Activated CD4-positive, alpha-beta T cell treated with anti-CD3 and anti-CD28 coated beads, Interleukin-2, amount 10 ng/mL, durations not matched to agents 24 days and 14 days (primary cell): ENCODE measurements at regions of chr17 and their contacts with region 1.

Region 1: DNA sequence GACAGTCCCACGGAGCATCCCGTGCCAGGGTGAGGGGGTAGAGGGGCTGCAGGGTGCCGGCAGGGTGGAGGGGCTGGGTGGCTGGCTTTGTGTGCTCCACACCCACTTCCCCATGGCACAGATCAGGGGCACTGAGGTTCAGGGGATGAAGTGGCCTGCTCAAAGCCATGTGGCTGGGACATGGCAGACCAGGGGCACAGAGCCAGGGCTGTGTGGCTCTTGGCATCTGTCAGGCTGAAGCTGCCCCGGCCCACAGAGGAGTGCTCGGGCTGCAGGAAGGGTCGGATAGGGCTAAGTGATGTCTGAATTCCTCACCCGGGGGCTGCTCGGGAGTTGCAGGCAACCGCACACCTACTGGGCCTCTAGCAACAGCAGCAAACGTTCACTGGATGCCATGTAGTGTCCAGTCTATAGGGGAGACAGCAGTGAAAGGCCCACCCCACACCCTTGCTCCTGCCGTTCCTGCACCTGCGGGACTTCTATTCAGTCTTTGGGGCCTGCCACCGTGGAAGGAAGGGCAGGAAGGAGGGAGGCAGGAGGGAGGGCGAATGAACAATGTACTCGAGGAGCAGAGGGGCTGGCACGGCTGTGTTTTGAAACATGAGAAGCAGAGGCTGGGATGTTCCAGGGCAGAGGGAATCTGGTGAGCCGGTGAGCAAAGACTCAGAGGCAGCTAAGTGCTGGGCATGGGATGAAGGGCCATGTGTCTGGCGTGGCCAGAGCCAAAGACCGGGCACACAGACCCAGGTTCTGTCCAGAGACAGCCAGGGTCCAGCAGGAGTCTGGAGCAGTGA is 15.1 kb downstream of the SLC5A10 start:
- DNase-seq: no peak
- H3K4me3 Mint-ChIP-seq: no peak overlapping the region
- H3K27ac Mint-ChIP-seq: no peak overlapping the region
- H3K4me1 Mint-ChIP-seq: peaks cover 11% of the 10 kb centered on the region
- H3K27me3 Mint-ChIP-seq: no peaks in the 10 kb centered on the region

Region 2: GRCh38 chr17:18954321-18954720 is 12.7 kb before region 1 on chr17:
- intact Hi-C with region 1: loop called (anchors 2 kb)
- DNase-seq: no peak
- H3K4me3 Mint-ChIP-seq: no peak overlapping the region
- H3K27ac Mint-ChIP-seq: no peak overlapping the region
- H3K4me1 Mint-ChIP-seq: peaks cover 15% of the 10 kb centered on the region
- H3K27me3 Mint-ChIP-seq: peaks cover 9% of the 10 kb centered on the region

Region 3: DNA sequence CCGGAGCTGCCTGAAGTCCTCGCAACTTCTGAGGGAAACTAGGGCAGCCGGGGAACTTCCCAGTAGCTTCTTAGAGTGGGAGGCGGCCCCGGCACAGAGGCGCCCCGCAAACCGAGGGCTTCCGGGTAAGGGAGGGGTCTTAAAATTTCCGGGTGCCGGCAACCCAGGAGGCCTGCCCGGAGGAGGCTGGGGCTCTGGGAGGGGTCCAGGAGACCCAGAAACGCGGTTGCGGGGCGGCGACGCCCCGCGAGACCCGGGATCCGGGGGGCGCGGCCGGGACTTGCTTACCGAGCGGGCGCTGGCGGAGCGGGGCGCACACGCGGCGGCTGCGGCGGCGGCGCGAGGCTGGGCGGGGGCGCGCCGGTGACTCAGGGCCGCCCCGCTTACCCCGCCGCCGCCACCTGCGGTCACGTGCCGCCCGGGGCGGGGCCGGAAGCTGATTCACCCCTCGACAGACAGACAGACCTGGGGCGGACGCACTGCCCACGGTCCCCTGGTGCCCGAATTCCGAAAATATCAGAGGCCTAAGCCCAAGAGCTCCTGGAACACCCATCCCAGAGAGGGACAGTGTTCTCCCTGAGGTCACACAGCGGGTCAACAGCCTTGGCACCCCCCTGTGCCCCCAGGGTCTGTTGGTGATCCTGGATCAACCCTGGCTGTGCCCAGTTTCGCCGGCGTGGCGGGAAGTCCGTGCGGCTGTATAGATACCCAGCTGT is 37.6 kb after region 1 on chr17 and contains the start of gene FAM83G:
- intact Hi-C with region 1: loop called (anchors 5 kb)
- DNase-seq: peak; percentile 94
- H3K4me3 Mint-ChIP-seq: peak within 1 kb of the TSS; percentile 90
- H3K27ac Mint-ChIP-seq: peak within 1 kb of the TSS; percentile 91
- H3K4me1 Mint-ChIP-seq: peaks cover 21% of the 10 kb centered on the region
- H3K27me3 Mint-ChIP-seq: peaks cover 14% of the 10 kb centered on the region
- total RNA-seq, gene FAM83G: 15.7 and 17.8 TPM in 2 replicates

Region 4: DNA sequence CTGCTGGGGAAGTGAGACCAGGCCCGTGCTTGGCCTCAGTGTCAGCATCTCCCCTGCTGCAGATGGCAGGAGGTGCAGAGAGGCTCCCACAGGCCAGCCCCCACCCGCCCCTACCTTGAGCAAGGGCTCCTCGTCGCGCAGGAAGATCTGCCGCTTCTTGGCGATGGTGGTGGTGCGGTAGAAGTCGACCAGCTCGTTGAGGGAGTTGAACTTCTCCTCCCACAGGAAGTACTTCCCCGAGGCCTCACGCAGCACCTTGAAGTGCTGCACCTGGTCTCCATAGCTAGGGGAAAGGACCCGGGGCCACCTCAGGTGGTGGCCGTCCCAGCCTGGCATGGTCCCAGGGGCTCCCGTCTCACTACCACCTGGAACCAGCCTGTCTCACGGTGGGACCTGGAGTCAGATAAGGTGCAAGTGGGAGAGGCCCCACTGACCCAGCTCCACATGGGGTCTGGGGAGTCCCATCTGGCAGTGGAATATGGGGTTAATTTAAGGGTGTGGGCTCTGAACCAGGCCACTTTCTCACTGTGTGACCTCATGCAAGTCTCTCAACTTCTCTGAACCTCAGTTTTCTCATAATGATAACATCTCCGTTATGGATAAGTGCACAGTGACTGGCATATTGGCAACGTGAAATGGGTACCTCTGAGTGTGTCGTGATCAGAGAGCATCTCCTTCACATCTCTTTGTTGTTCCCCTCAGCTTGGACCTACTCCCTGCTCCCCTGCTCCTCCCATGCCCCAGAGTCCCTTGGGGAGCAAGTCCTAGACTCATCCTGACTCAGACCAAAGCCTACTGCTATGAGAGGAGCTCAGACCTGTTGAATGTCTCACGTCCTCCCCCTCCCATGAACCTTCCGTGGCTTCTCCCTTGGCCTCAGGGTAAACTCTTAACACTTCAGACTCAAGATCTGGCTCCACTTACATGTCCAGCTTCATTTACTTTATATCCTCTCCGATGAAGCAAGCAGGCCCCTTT is 57.4 kb after region 1 on chr17:
- intact Hi-C with region 1: no loop called
- DNase-seq: no peak
- H3K4me3 Mint-ChIP-seq: peak overlapping the region; percentile 29
- H3K27ac Mint-ChIP-seq: peak overlapping the region; percentile 22
- H3K4me1 Mint-ChIP-seq: peaks cover 13% of the 10 kb centered on the region
- H3K27me3 Mint-ChIP-seq: no peaks in the 10 kb centered on the region